PC-3 (cell line): ENCODE measurements at regions of chr6 and their contacts with region 1.

Region 1: GRCh38 chr6:3887150-3887700 is 38.1 kb downstream of the FAM50B start:
- DNase-seq: peak; percentile 36
- ATAC-seq: no peak
- H3K4me3 ChIP-seq: no peak overlapping the region
- H3K27ac ChIP-seq: peak overlapping the region; percentile 89
- H3K4me1 ChIP-seq: peaks cover 46% of the 10 kb centered on the region
- H3K27me3 ChIP-seq: no peaks in the 10 kb centered on the region
- CTCF ChIP-seq: peak; percentile 48

Region 2: GRCh38 chr6:3913077-3913957 is 26.1 kb after region 1 on chr6:
- CTCF ChIA-PET with region 1: interaction called, 14 read pairs
- POLR2A ChIA-PET with region 1: interaction called, 9 read pairs
- intact Hi-C with region 1: loop called (anchors 1 kb)
- DNase-seq: peak; percentile 99
- ATAC-seq: peak; percentile 73
- H3K4me3 ChIP-seq: peak overlapping the region; percentile 65
- H3K27ac ChIP-seq: peak overlapping the region; percentile 95
- H3K4me1 ChIP-seq: peaks cover 44% of the 10 kb centered on the region
- H3K27me3 ChIP-seq: no peaks in the 10 kb centered on the region
- CTCF ChIP-seq: no peak